Naive thymus-derived CD4-positive, alpha-beta T cell (primary cell): ENCODE measurements at regions of chr5 and their contacts with region 1.

Region 1: DNA sequence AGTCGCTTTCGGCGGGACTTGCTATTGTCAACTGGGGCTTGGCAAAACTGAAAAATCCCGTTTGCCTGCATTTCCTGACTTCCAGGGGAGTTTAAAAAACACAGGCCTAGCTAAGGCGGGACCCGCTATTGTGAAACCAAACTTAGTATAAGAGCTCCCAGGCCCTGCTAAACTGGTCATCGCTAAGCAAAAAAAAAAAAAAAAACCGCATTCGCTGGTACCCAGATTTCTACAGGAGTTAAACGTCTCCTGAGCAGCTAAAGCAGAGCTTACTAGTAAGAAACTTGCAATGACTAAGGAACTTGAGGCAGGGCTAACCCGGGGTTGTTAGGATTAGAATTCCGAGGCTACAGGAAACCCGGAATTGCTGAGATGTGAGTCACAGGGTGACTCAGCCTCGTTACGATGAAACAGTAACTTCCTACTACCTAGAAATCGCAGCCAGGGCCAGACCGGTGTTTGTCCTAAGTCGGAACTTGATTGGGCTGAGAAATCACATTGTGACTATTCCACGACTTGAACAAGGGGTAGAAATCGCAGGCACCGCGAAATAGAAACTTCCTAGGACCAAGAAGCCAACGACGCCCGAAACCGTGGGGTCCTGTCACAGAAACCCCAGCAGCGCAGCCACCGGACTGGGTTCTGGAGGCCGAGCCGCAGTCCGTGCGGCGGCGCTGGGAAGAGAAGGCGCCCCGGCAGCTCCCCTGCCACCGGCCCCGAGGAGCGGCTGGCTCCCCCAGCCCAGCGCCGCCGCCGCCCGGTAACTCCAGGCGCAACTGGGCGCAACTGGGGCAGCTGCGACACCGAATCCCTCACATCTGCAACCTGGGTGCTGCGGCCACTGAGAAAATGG is 89.5 kb downstream of the ANXA2R start:
- DNase-seq: peak in 8 of 9 donors; percentile 39 to 77 (median 51)
- ATAC-seq: peak; percentile 51
- H3K4me3 ChIP-seq: peak overlapping the region; percentile 80
- H3K4me3 Mint-ChIP-seq: peak overlapping the region; percentile 87 to 99 (median 97)
- H3K27ac ChIP-seq: peak overlapping the region; percentile 98
- H3K27ac Mint-ChIP-seq: peak overlapping the region; percentile 97 to 100 (median 99)
- H3K4me1 ChIP-seq: peaks cover 5 to 22% of the 10 kb centered on the region in 2 donors
- H3K4me1 Mint-ChIP-seq: peaks cover 13 to 51% (median 23%) of the 10 kb centered on the region in 7 donors
- H3K27me3 ChIP-seq: no peaks in the 10 kb centered on the region
- H3K27me3 Mint-ChIP-seq: peaks cover 0 to 9% (median 0%) of the 10 kb centered on the region in 5 donors

Region 2: DNA sequence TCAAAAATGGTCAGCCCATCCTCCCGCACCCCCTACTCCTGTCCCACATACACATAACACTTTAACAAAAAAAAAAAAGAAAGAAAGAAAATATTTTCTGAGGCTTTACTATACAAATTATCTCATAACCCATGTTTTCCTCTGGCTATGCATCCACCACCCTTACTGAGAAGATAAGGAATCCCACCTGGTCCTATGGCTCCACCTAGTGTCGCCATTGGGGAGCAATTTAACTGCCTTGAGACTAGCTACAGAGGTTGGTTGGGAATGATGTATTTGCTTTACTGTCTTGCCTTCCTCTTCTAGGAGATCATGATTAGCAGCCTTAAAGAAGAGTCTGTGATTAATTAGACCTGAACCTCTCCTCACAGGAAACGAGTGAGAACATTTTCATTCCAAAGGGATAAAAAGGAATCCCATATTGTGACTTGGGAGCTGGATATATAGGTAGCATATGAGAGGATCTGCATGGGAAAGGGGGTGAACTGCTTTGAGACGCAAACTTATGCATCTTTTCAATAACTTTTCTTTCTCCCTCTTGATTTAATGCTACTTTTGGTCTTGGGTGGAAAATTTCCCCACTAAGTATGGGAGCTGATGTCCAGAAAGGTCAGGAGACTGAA is 61.2 kb before region 1 on chr5:
- CTCF ChIA-PET with region 1: no interaction called
- POLR2A ChIA-PET with region 1: interaction called, 10 read pairs
- intact Hi-C with region 1: no loop called
- DNase-seq: peak in 8 of 9 donors; percentile 24 to 56 (median 49)
- ATAC-seq: peak; percentile 87
- H3K4me3 ChIP-seq: no peak overlapping the region
- H3K4me3 Mint-ChIP-seq: no peak overlapping the region
- H3K27ac ChIP-seq: no peak overlapping the region
- H3K27ac Mint-ChIP-seq: no peak overlapping the region
- H3K4me1 ChIP-seq: no peaks in the 10 kb centered on the region
- H3K4me1 Mint-ChIP-seq: no peaks in the 10 kb centered on the region
- H3K27me3 ChIP-seq: no peaks in the 10 kb centered on the region
- H3K27me3 Mint-ChIP-seq: peaks cover 3 to 29% (median 6%) of the 10 kb centered on the region in 5 donors

Region 3: GRCh38 chr5:42965934-42966333 is 15.3 kb after region 1 on chr5:
- CTCF ChIA-PET with region 1: interaction called, 5 read pairs
- POLR2A ChIA-PET with region 1: interaction called, 13 read pairs
- intact Hi-C with region 1: no loop called
- DNase-seq: no peak
- ATAC-seq: no peak
- H3K4me3 ChIP-seq: no peak overlapping the region
- H3K4me3 Mint-ChIP-seq: no peak overlapping the region
- H3K27ac ChIP-seq: no peak overlapping the region
- H3K27ac Mint-ChIP-seq: no peak overlapping the region
- H3K4me1 ChIP-seq: peaks cover 0 to 16% of the 10 kb centered on the region in 2 donors
- H3K4me1 Mint-ChIP-seq: peaks cover 0 to 24% (median 9%) of the 10 kb centered on the region in 7 donors
- H3K27me3 ChIP-seq: no peaks in the 10 kb centered on the region
- H3K27me3 Mint-ChIP-seq: peaks cover 0 to 1% (median 0%) of the 10 kb centered on the region in 5 donors

Region 4: DNA sequence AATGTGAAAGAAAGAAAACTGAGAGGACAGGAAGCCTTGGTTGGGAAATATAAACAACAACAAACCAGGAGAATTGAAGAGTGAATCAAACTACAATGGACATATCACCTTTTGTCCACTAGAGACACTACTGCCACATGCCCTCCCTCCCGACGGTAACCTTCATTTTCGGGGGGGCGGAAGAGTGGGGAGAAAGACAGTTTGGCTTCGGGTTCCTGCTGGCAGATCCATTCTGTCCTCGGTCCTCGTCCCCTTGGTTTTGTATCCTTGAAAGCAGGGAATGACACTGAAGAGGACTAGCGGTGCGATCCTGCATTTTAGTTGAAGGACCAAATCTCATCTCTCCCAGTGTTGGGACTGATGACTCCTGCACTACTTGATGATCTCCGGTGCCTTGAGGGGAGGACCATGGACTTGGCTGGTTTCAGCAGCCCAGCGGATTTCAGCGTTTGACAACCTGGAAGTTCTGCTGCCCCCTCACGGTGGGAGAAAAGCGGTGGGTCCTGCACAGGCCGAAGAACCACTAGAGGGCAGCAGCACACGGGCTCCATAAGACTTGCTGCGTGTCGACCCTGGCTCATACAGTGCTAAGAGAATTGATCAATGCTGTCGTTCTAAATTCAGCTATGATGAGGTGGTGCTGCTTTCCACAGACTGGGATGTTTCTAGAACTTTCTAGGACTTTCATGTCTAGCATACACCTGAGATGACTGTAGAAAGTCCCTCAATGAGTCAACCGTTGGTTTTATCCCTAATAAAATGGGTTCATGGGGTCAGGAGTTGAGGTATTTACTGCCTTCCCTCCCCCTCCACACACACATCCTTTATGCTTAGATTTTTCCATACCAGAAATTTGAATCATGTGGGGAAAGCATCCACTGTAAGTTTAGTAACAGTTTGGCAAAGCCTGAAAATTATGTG is 155.0 kb after region 1 on chr5:
- CTCF ChIA-PET with region 1: interaction called, 4 read pairs
- POLR2A ChIA-PET with region 1: interaction called, 15 read pairs
- intact Hi-C with region 1: loop called (anchors 1 kb)
- DNase-seq: peak; percentile 75 to 90 (median 85)
- ATAC-seq: peak; percentile 99
- H3K4me3 ChIP-seq: peak overlapping the region; percentile 66
- H3K4me3 Mint-ChIP-seq: peak overlapping the region; percentile 77 to 93 (median 89)
- H3K27ac ChIP-seq: peak overlapping the region; percentile 59
- H3K27ac Mint-ChIP-seq: peak overlapping the region; percentile 43 to 92 (median 88)
- H3K4me1 ChIP-seq: peaks cover 6 to 22% of the 10 kb centered on the region in 2 donors
- H3K4me1 Mint-ChIP-seq: peaks cover 21 to 49% (median 38%) of the 10 kb centered on the region in 7 donors
- H3K27me3 ChIP-seq: no peaks in the 10 kb centered on the region
- H3K27me3 Mint-ChIP-seq: no peaks in the 10 kb centered on the region

Region 5: DNA sequence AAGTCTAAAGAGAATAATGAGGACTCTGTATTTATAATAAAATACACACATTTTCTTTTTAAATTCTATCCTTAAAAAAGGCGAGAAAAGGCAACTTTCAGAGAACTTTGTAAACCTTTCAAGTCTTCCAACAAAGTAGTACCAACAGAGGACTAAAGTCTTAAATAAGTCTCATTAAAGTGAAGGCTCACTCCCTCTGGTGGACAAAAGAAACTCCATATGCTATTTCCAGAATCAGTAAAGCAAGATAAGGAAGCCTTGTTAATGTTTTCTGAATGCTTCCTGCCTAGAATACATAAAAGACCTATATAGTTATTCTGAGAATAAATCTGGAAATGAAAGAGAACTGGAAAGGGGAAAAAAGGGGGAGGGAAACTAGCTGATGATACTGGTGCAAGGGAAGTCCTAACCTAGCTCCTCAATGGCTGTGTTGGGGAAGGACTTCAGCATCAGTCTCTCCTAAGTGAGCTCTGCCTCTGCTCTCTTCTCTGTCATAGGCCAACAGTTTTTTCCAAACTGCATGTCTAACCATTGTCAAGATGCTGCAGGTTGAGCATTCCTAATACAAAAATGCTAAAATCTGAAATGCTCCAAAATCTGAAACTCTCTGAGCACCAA is 355.4 kb after region 1 on chr5:
- CTCF ChIA-PET with region 1: no interaction called
- POLR2A ChIA-PET with region 1: no interaction called
- intact Hi-C with region 1: loop called in 1 of 2 experiments (anchors 2 kb)
- DNase-seq: peak in 7 of 9 donors; percentile 24 to 64 (median 50)
- ATAC-seq: peak; percentile 79
- H3K4me3 ChIP-seq: no peak overlapping the region
- H3K4me3 Mint-ChIP-seq: peak overlapping the region in 1 of 10 donors; percentile 18
- H3K27ac ChIP-seq: no peak overlapping the region
- H3K27ac Mint-ChIP-seq: peak overlapping the region in 6 of 9 donors; percentile 4 to 86 (median 30)
- H3K4me1 ChIP-seq: peaks cover 0 to 10% of the 10 kb centered on the region in 2 donors
- H3K4me1 Mint-ChIP-seq: peaks cover 21 to 82% (median 52%) of the 10 kb centered on the region in 7 donors
- H3K27me3 ChIP-seq: no peaks in the 10 kb centered on the region
- H3K27me3 Mint-ChIP-seq: no peaks in the 10 kb centered on the region